ENCODE measurements at regions of chr5 and their contacts with region 1.

Region 1: DNA sequence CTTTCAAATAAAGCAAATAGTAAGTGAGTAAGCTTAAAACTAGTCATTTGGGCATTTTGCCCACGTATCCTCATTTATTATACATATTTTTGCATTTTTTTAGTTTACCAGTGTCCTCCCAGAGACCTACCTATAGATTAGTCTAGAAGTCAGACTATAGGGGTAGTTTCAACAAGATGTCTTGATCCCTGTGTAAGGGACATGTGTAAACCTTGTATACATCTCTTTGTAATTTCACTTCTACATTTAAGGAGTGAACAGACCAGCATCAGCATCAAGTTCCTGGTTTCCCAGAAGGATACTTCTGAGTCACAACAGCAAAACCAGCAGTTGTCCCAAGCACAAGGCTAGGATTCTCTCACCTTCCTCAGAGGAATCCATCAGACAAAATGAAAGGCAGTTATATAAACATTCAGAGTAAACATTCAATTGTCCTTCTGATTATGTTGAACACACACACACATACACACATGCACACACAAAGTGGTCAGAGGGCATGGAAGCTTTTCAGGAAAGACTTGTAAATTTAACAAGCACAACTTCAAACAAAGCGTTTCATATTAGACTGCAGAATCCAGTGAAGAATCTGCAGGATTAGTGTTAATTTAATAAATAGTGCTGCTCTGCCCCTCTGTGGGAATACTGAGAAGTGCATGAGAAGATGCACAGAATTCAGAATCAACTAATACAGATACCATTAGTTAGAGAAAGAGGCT is 55.4 kb downstream of the HINT1 start:
- DNase-seq: no peak

Region 2: GRCh38 chr5:130871346-130872086 is 238.2 kb before region 1 on chr5:
- intact Hi-C with region 1: loop called (anchors 5 kb)
- DNase-seq: no peak

Measured in cardiac septum (tissue), 1 donor.